Caco-2 (cell line): ENCODE measurements at regions of chr1 and their contacts with region 1.

Region 1: GRCh38 chr1:119675349-119676345 is 27.6 kb upstream of the ZNF697 start:
- DNase-seq: peak; percentile 66 to 74
- H3K4me3 ChIP-seq: peak overlapping the region; percentile 28
- H3K4me3 Mint-ChIP-seq: peak overlapping the region; percentile 66
- H3K27ac Mint-ChIP-seq: no peak overlapping the region
- H3K4me1 ChIP-seq: no peaks in the 10 kb centered on the region
- H3K4me1 Mint-ChIP-seq: peaks cover 13% of the 10 kb centered on the region
- H3K27me3 ChIP-seq: no peaks in the 10 kb centered on the region
- H3K27me3 Mint-ChIP-seq: no peaks in the 10 kb centered on the region
- CTCF ChIP-seq: peak; percentile 65 to 68

Region 2: DNA sequence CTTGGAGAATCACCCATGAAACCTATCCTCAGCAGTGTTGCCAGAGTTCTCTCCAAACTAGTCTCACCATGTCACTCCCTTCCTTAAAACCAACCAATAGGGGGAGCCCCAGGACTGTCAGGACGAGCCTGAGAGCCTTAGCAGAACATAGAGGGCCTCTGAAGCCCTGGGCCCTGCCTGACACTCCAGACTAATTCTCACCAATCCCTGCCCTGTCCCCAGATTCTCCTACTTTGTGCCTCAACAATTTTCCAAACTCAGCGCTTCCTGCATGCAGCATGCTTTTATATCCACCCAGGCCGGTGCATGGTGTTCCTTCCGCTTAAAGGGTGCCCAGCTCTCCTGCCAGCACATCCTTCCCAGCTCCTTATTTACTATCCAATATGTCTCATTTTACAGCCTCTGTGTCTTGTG is 125.9 kb before region 1 on chr1:
- CTCF ChIA-PET with region 1: no interaction called
- POLR2A ChIA-PET with region 1: no interaction called
- intact Hi-C with region 1: loop called (anchors 1 kb)
- DNase-seq: peak; percentile 66 to 75
- H3K4me3 ChIP-seq: no peak overlapping the region
- H3K4me3 Mint-ChIP-seq: no peak overlapping the region
- H3K27ac Mint-ChIP-seq: no peak overlapping the region
- H3K4me1 ChIP-seq: no peaks in the 10 kb centered on the region
- H3K4me1 Mint-ChIP-seq: peaks cover 11% of the 10 kb centered on the region
- H3K27me3 ChIP-seq: no peaks in the 10 kb centered on the region
- H3K27me3 Mint-ChIP-seq: no peaks in the 10 kb centered on the region
- CTCF ChIP-seq: peak in 1 of 2 experiments; percentile 58

Region 3: DNA sequence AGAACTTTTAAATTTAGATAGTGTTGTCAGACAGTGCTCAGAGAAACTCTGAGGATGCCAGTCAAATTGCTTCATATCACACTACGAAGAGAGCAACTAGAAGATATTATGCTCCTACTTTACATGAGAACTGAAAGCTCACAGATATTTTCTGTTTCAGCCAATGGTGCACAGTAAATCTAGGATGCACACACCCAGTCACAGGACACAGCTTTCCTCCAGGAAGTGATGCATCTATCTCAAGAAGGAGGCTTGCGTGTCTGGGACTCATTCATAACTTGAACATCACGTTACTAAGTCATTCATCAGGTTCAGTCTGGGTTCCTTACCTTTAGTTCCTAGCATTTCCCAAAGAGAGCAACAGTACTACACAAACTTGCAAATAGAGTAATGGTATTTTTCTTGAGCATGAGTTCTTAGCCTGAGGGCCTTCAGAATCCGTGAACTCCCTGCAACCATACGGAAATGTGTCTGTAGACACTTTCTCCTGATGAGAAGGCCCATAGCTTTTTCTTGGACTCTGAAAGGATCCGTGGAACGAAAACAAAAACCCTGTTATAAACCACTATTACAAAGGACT is 39.7 kb before region 1 on chr1:
- CTCF ChIA-PET with region 1: no interaction called
- POLR2A ChIA-PET with region 1: no interaction called
- intact Hi-C with region 1: no loop called
- DNase-seq: no peak
- H3K4me3 ChIP-seq: no peak overlapping the region
- H3K4me3 Mint-ChIP-seq: no peak overlapping the region
- H3K27ac Mint-ChIP-seq: no peak overlapping the region
- H3K4me1 ChIP-seq: no peaks in the 10 kb centered on the region
- H3K4me1 Mint-ChIP-seq: no peaks in the 10 kb centered on the region
- H3K27me3 ChIP-seq: no peaks in the 10 kb centered on the region
- H3K27me3 Mint-ChIP-seq: no peaks in the 10 kb centered on the region
- CTCF ChIP-seq: no peak

Region 4: GRCh38 chr1:119647734-119648619 is 27.7 kb before region 1 on chr1 and contains the start of gene ZNF697:
- CTCF ChIA-PET with region 1: interaction called, 6 read pairs
- POLR2A ChIA-PET with region 1: no interaction called
- intact Hi-C with region 1: loop called (anchors 1 kb)
- DNase-seq: peak; percentile 89 to 93
- H3K4me3 ChIP-seq: peak within 1 kb of the TSS; percentile 89
- H3K4me3 Mint-ChIP-seq: peak within 1 kb of the TSS; percentile 97
- H3K27ac Mint-ChIP-seq: peak within 1 kb of the TSS; percentile 40
- H3K4me1 ChIP-seq: no peaks in the 10 kb centered on the region
- H3K4me1 Mint-ChIP-seq: peaks cover 9% of the 10 kb centered on the region
- H3K27me3 ChIP-seq: no peaks in the 10 kb centered on the region
- H3K27me3 Mint-ChIP-seq: peaks cover under 1% of the 10 kb centered on the region
- CTCF ChIP-seq: peak; percentile 14 to 21
- total RNA-seq, gene ZNF697: 2.9 and 3.1 TPM in 2 replicates

Region 5: DNA sequence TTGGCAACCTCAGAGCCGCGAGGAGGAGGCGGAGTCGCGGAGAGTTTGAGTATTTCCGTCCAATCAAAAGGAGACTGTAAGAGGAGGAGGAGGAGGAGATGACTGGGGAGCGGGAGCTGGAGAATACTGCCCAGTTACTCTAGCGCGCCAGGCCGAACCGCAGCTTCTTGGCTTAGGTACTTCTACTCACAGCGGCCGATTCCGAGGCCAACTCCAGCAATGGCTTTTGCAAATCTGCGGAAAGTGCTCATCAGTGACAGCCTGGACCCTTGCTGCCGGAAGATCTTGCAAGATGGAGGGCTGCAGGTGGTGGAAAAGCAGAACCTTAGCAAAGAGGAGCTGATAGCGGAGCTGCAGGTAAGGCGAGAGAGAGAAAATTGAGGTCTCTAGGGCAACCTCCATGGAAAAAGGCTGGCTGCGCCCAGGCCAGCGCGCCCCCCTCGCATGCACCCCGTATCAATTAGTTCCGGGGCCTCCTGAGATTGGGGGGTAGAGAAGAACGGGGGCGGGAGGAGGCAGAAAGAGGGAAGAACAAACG is 36.2 kb after region 1 on chr1 and contains the start of gene PHGDH:
- CTCF ChIA-PET with region 1: interaction called, 4 read pairs
- POLR2A ChIA-PET with region 1: no interaction called
- intact Hi-C with region 1: loop called (anchors 5 kb)
- DNase-seq: peak; percentile 81 to 82
- H3K4me3 ChIP-seq: peak within 1 kb of the TSS; percentile 69
- H3K4me3 Mint-ChIP-seq: peak within 1 kb of the TSS; percentile 95
- H3K27ac Mint-ChIP-seq: peak within 1 kb of the TSS; percentile 98
- H3K4me1 ChIP-seq: peaks cover 18% of the 10 kb centered on the region
- H3K4me1 Mint-ChIP-seq: peaks cover 13% of the 10 kb centered on the region
- H3K27me3 ChIP-seq: no peaks in the 10 kb centered on the region
- H3K27me3 Mint-ChIP-seq: no peaks in the 10 kb centered on the region
- CTCF ChIP-seq: no peak
- total RNA-seq, gene PHGDH: 383 and 410 TPM in 2 replicates